CD8-positive, alpha-beta T cell (primary cell): ENCODE measurements at regions of chr14 and their contacts with region 1.

Region 1: DNA sequence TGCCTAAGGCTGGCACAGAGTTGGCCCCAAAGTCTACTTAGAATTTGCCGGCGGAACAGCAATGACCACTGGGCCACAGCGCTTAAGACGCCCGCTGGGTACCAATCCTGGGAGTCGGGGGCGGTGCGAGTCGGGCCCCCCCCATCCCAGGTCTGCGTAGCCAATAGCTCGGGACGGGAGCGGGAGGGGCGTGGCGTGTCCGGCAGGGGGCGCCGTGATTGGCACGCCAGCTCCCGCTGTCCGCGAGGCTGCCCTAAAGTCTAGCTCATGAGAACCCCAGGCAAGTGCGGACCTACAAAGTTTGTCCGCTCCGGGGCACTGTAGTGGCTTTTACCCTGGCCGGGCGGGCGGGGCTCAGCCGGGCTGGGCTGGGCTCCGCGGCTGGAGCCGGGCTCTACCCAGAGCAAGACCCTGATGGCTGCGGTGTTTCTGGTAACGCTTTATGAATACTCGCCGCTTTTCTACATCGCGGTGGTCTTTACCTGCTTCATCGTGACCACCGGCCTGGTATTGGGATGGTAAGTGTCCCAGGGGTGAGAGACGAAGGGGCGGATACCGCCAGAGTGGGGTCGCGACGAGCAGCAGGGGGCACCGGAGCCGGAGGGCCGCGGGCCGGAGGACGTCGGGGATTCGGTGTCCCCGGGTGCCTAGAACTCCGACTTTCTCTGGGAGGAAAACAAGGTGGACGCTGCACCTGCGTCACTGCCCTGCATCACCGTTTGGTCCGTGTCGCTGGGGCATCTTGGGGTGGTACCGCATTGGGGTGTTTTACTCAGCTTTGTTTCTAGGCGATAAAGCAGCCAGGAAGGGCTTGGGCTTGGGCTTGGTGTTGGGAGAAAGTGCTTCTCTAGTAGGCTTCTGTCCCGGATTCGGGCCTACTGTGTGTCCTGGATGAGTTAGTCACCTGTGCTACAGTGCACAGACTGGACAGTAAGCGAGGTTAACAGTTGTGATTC is at the start of gene CGRRF1:
- DNase-seq: peak; percentile 90 to 98 (median 96)
- ATAC-seq: peak; percentile 95
- H3K4me3 ChIP-seq: peak within 1 kb of the TSS; percentile 92 to 99
- H3K4me3 Mint-ChIP-seq: peak within 1 kb of the TSS; percentile 96
- H3K27ac ChIP-seq: peak within 1 kb of the TSS; percentile 73 to 92
- H3K27ac Mint-ChIP-seq: peak within 1 kb of the TSS; percentile 92
- H3K4me1 ChIP-seq: peaks cover 31% of the 10 kb centered on the region
- H3K4me1 Mint-ChIP-seq: peaks cover 51% of the 10 kb centered on the region
- H3K27me3 ChIP-seq: no peaks in the 10 kb centered on the region
- H3K27me3 Mint-ChIP-seq: peaks cover 4% of the 10 kb centered on the region
- CTCF ChIP-seq: peak; percentile 64
- total RNA-seq, gene CGRRF1: 59.6 to 59.9 TPM

Region 2: DNA sequence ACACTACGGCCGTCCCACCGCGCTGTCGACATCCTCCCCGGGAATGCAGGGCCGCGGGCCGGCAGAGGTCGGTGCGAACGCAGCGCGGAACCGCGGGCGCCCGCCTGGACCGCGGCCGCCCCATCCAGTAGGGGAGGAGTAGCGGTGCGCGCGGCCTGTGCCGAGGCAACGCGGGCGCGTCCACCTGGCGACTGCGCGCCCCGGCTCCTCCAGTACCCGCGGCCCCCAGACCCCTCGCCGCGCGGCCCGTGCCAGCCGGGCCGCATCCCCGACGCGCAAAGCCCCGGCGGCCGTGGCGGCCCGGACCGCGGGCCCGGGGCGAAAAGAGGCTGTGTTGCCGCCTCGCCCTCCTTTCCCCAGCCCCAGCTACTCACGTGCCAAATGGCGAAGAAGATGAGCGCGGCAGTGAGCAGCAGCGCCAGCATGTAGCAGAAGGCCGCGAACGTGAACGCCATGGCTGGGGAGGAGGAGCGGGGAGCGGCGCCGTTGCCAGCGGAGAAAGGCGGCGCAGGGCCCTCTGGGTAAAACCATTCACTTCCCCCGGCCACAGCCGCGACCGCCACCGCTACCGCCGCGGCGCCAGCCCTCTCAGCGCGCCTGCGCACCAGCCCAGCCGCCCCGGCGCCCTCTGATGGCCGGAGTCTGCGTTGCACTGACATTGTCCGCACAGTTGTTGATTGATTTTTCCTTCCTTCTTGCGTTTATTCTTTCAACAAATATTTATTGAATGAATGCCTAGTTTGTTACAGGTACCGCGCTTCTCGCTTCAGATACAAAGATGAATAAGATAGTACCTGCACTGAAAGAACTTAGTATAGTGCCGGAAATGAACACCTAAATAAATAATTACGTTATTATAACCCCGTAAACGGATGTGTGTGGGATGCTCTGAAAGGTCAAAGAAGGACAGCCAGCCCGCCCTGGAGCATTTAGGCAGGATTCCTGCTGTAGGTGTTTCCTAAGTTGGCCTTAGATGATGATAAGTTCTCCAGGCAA is 68.7 kb before region 1 on chr14 and contains the start of gene CNIH1:
- CTCF ChIA-PET with region 1: no interaction called
- POLR2A ChIA-PET with region 1: no interaction called
- intact Hi-C with region 1: loop called (anchors 1 to 2 kb)
- DNase-seq: peak; percentile 88 to 98 (median 93)
- ATAC-seq: peak; percentile 92
- H3K4me3 ChIP-seq: peak within 1 kb of the TSS; percentile 45 to 66
- H3K4me3 Mint-ChIP-seq: peak within 1 kb of the TSS; percentile 93
- H3K27ac ChIP-seq: peak within 1 kb of the TSS; percentile 76 to 81
- H3K27ac Mint-ChIP-seq: peak within 1 kb of the TSS; percentile 96
- H3K4me1 ChIP-seq: peaks cover 18% of the 10 kb centered on the region
- H3K4me1 Mint-ChIP-seq: peaks cover 41% of the 10 kb centered on the region
- H3K27me3 ChIP-seq: no peaks in the 10 kb centered on the region
- H3K27me3 Mint-ChIP-seq: no peaks in the 10 kb centered on the region
- CTCF ChIP-seq: peak; percentile 99
- total RNA-seq, gene CNIH1: 49.2 to 55.6 TPM

Region 3: DNA sequence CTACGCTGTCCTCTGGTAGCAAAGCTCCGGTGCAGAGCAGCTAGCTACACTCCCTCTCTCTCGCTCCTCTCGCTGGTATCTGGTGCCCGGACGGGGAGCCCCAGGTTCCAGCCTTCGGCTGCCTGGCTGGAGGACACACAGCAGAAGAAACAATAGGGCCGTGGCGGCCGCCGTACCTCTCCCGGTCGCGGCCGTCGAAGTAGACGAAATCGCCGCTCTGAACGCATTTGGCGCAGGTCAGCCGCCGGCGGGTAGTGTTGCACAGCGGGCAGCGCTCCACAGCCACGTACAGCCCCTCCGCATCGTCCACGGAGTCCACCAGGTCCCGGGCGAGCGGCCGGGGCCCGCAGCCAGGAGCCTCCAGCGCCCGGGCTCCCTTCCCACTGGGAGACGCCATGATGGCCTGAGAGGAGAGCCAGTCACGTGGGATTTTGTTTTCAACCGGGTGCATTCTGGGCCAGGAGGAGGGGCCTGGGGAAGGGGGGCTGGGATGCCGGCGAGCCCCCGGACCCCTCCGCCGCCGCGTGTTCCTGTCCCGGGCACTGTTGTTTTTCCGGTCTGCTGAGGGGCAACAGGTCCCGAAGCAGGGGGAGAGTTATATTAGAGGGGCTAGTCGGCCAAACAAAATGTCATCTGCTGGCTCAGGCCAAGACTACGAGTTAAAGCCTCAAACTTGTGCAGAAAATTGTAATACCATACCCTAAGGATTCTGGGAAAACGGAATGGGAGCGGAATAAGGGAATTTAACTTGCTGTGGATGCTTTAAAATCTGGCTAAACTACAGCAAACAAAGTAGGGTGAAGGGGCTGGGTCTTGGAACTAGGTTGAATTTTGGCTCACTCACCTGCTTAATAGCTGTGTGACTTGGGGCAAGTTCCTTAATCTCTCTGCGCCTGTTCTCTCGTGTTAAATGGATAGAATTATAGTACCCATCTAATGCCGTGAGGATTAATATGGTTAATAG is 901.9 kb after region 1 on chr14 and contains the start of gene ATG14:
- CTCF ChIA-PET with region 1: no interaction called
- POLR2A ChIA-PET with region 1: no interaction called
- intact Hi-C with region 1: loop called in 1 of 2 experiments (anchors 5 kb)
- DNase-seq: peak; percentile 50 to 84 (median 68)
- ATAC-seq: peak; percentile 95
- H3K4me3 ChIP-seq: peak within 1 kb of the TSS; percentile 89 to 90
- H3K4me3 Mint-ChIP-seq: peak within 1 kb of the TSS; percentile 90
- H3K27ac ChIP-seq: peak within 1 kb of the TSS; percentile 54 to 67
- H3K27ac Mint-ChIP-seq: peak within 1 kb of the TSS; percentile 88
- H3K4me1 ChIP-seq: peaks cover 23% of the 10 kb centered on the region
- H3K4me1 Mint-ChIP-seq: peaks cover 44% of the 10 kb centered on the region
- H3K27me3 ChIP-seq: no peaks in the 10 kb centered on the region
- H3K27me3 Mint-ChIP-seq: no peaks in the 10 kb centered on the region
- CTCF ChIP-seq: no peak
- total RNA-seq, gene ATG14: 30.9 to 32.7 TPM